Left colon (tissue), 2 donors: ENCODE measurements at regions of chr2 and their contacts with region 1.

Region 1: GRCh38 chr2:74482801-74483674 is at the starts of genes CCDC142 and TTC31:
- DNase-seq: peak; percentile 97 to 98
- ATAC-seq: peak; percentile 93
- total RNA-seq, gene CCDC142: 22.4 to 23.9 TPM
- total RNA-seq, gene TTC31: 23.6 to 29.7 TPM

Region 2: GRCh38 chr2:74045454-74045853 is 437.6 kb before region 1 on chr2:
- intact Hi-C with region 1: no loop called
- DNase-seq: no peak
- ATAC-seq: no peak

Region 3: DNA sequence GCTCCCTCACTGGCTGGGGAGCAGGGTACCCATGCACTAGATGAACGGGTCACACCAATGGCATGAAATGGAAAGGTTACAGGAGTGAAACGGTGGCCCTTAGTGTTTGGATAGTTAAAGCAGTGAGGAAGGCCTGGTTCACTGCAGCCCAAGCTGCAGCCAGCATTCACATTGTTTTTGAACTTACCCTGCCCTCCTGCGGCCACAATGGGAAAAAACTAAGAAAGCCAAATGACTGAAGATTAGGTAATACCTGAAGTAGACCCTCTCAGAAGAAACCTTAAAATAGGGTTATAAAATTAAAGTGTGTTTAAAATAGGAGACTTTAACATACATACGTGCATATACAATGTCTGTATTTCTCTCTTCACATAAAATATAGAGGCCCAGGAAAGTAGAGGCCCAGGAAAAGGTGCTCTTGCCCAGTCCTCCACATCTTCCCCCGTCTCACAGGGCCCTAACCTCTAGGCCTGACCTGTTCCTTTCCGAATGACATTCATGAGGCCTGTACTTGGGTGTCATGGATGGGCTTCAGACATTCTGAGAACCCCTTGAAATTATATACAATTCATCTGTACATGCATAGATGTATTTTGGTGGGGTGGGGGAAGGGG is 104.7 kb after region 1 on chr2:
- intact Hi-C with region 1: loop called (anchors 2 to 5 kb)
- DNase-seq: peak; percentile 50 to 60
- ATAC-seq: peak; percentile 91

Region 4: DNA sequence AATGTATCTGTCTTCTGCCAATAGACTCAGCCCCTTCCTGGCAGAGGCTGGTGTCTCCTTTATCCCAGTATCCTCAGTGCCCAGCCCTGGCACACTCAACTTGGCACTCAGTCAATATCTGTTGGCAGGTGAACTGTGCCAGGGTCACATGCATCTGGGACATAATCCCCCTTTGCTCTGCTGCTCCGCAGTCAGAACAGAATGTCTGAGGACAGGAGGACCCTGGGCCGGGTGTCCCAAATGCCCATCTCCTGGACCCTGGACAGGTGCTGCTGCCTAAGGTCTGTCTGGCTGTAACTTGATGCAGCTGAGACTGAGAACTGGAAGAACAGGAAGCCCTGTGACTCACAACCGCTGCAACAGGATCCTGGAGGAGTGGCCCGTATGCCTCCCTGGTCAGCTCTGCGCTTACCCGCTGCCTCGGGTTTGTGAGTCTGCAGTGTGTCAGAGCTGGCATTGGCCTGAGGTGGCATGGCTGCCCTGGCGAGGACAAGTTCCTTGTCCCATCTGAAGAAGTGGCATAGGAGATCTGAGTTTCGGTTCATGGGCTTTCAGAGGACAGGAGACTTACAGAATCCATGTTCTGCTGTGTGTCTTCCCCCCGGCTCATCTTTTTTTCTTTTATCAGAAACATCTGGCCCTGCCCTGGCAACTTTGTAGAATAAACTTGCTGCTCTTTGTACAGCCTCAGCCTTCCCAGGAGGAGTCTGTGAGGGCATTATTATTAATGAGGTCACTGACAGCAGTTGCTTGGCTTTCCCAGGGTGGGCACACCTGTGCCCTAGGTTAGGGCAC is 362.4 kb after region 1 on chr2:
- intact Hi-C with region 1: no loop called
- DNase-seq: peak; percentile 78 to 94
- ATAC-seq: peak; percentile 83